Tibial artery (tissue), 4 donors: ENCODE measurements at regions of chr7 and their contacts with region 1.

Region 1: DNA sequence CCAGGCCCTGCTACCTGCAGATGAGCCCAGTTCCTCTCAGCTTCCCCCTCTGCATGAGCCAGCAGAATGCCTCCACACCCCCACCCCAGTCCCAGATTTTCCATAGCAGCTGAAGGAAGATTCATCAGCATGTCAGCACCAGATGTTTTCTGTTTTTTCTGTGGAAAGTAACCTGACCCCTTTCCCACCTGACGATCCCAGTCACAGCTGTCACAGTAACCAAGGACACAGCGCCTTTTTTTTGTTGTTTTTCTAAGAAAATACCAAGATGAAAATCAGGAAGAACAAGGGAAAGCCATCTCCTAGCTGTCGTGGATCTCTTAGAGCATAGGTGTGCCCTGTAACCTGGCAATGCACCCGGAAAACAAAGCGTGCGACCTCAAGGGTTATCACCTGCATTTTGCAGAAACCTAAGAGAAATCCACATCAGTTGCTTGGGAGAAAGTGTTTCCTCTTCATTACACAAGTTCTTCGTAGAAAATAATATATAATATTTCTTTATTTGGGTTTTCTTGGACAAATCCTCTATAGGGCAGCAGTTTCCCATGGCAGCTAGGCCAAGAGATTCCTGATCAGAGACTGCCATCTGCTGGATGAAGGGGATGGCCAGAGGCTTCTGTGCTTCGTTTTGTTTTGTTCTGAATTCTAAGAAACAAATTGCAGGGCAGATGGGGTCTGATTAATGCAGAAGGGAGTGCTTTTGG is 401.9 kb downstream of the TNS3 start:
- DNase-seq: peak in 1 of 2 donors; percentile 45
- H3K4me3 ChIP-seq: no peak overlapping the region
- H3K27ac ChIP-seq: no peak overlapping the region
- H3K4me1 ChIP-seq: peaks cover 0 to 46% (median 45%) of the 10 kb centered on the region in 4 donors
- H3K27me3 ChIP-seq: no peaks in the 10 kb centered on the region
- CTCF ChIP-seq: peak; percentile 81 to 82

Region 2: DNA sequence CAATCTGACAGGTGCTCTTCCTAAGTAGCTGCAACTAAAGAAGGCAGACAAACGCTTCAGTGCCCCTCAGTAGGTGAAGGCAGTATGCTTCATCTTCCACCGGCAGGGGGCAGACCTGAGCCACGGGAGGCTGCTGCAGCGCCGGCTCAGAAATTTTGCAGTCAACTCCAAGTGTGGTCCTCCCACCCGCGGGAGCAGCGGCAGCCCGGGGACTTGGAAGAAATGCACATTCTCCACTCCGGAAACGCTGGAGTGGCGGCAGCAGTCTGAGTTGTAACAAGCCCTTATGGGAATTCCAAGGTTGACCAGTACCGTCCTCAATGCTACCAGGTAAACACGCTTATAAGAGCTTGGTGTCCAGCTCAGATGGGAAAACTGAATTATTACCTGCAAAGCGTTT is 1262.3 kb before region 1 on chr7:
- intact Hi-C with region 1: loop called (anchors 5 kb)
- DNase-seq: peak; percentile 68 to 86
- H3K4me3 ChIP-seq: peak overlapping the region; percentile 64 to 67
- H3K27ac ChIP-seq: no peak overlapping the region
- H3K4me1 ChIP-seq: peaks cover 0 to 49% (median 40%) of the 10 kb centered on the region in 4 donors
- H3K27me3 ChIP-seq: no peaks in the 10 kb centered on the region
- CTCF ChIP-seq: peak; percentile 87 to 95

Region 3: GRCh38 chr7:46454816-46455215 is 725.1 kb before region 1 on chr7:
- intact Hi-C with region 1: no loop called
- DNase-seq: no peak
- H3K4me3 ChIP-seq: no peak overlapping the region
- H3K27ac ChIP-seq: peak overlapping the region in 1 of 2 donors; percentile 24
- H3K4me1 ChIP-seq: peaks cover 0 to 31% (median 6%) of the 10 kb centered on the region in 4 donors
- H3K27me3 ChIP-seq: no peaks in the 10 kb centered on the region
- CTCF ChIP-seq: no peak

Region 4: DNA sequence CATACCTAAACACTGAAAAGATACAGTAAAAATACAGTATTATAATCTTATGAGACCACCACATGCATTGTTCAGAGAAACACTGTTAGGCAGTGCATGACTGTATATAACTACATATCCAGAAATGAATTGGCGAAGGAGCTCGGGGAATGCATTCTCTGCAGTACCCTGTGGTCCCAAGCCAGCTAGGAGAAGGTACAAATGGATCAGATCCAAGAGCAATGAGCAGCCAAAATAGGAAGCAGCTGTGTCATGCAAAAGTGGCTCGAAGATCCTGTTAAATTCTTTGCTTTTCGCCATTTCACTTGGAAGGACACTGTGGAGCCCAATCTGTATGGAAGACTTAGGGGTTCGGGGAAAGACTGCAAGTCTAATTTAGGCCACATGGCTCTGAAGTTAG is 67.2 kb after region 1 on chr7:
- intact Hi-C with region 1: loop called (anchors 5 kb)
- DNase-seq: no peak
- H3K4me3 ChIP-seq: no peak overlapping the region
- H3K27ac ChIP-seq: no peak overlapping the region
- H3K4me1 ChIP-seq: no peaks in the 10 kb centered on the region
- H3K27me3 ChIP-seq: no peaks in the 10 kb centered on the region
- CTCF ChIP-seq: no peak